Ovary (tissue), 10 donors: ENCODE measurements at regions of chr4 and their contacts with region 1.

Region 1: DNA sequence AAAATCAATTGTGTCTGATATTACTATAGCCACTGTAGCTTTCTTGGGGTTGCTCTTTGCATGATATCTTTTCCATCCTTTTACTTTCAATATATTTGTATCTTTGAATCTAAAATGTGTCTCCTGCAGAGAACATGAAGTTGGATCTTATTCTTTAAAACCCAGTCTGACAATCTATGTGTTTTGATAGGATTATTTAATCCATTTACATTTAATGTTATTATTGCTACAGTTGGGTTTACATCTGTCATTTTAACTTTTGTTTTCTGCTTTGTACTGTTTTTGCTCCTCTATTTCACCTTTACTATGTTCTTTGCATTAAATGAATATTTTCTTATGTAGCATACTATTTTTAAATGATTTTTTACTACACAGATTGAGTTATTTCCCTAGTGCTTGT is 230.9 kb downstream of the ANTXR2 start:
- DNase-seq: no peak
- H3K4me3 ChIP-seq: no peak overlapping the region
- H3K27ac ChIP-seq: no peak overlapping the region
- H3K4me1 ChIP-seq: no peaks in the 10 kb centered on the region
- H3K27me3 ChIP-seq: no peaks in the 10 kb centered on the region
- CTCF ChIP-seq: no peak
- EP300 ChIP-seq: no peak
- POLR2A ChIP-seq: no peak

Region 2: GRCh38 chr4:79875344-79875899 is 33.3 kb after region 1 on chr4:
- intact Hi-C with region 1: loop called in 1 of 4 experiments (anchors 5 kb)
- DNase-seq: no peak
- H3K4me3 ChIP-seq: no peak overlapping the region
- H3K27ac ChIP-seq: no peak overlapping the region
- H3K4me1 ChIP-seq: no peaks in the 10 kb centered on the region
- H3K27me3 ChIP-seq: no peaks in the 10 kb centered on the region
- CTCF ChIP-seq: no peak
- EP300 ChIP-seq: no peak
- POLR2A ChIP-seq: no peak